ENCODE measurements at regions of chr2 and their contacts with region 1.

Region 1: GRCh38 chr2:181183878-181184542 is 203.6 kb downstream of the UBE2E3 start:
- DNase-seq: no peak
- ATAC-seq: peak; percentile 94
- H3K4me3 Mint-ChIP-seq: no peak overlapping the region
- H3K27ac Mint-ChIP-seq: peak overlapping the region; percentile 38
- H3K4me1 Mint-ChIP-seq: peaks cover 18% of the 10 kb centered on the region
- H3K27me3 Mint-ChIP-seq: no peaks in the 10 kb centered on the region
- CTCF ChIP-seq: no peak

Region 2: GRCh38 chr2:181235683-181236459 is 51.9 kb after region 1 on chr2:
- CTCF ChIA-PET with region 1: no interaction called
- POLR2A ChIA-PET with region 1: no interaction called
- intact Hi-C with region 1: loop called (anchors 5 kb)
- DNase-seq: no peak
- ATAC-seq: peak; percentile 42
- H3K4me3 Mint-ChIP-seq: no peak overlapping the region
- H3K27ac Mint-ChIP-seq: no peak overlapping the region
- H3K4me1 Mint-ChIP-seq: peaks cover 15% of the 10 kb centered on the region
- H3K27me3 Mint-ChIP-seq: no peaks in the 10 kb centered on the region
- CTCF ChIP-seq: no peak

Region 3: DNA sequence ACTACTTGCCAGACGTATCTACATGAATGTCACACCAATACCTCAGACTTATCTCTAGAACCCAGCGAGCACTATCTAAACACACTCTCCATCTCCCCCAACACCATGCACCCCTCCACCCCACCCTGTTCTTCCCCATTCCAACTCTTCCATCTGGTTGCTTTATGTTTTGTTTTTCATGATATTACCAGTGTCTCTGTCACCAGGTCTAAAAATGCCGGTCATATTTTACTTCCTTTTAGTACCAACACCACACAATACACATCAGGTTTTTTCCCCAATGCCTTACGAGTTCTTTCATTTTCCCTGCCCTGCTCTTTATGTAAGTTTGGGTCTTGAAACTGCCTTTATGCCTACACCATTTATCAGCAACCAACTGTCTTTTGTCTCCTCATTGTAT is 263.0 kb after region 1 on chr2:
- CTCF ChIA-PET with region 1: no interaction called
- POLR2A ChIA-PET with region 1: no interaction called
- intact Hi-C with region 1: no loop called
- DNase-seq: no peak
- ATAC-seq: peak; percentile 52
- H3K4me3 Mint-ChIP-seq: peak overlapping the region; percentile 17
- H3K27ac Mint-ChIP-seq: peak overlapping the region; percentile 54
- H3K4me1 Mint-ChIP-seq: peaks cover 29% of the 10 kb centered on the region
- H3K27me3 Mint-ChIP-seq: no peaks in the 10 kb centered on the region
- CTCF ChIP-seq: no peak